Left cardiac atrium (tissue), 4 donors: ENCODE measurements at regions of chr22 and their contacts with region 1.

Region 1: GRCh38 chr22:43955040-43955882 is at the start of gene SAMM50:
- DNase-seq: peak; percentile 96
- ATAC-seq: peak; percentile 97 to 99
- total RNA-seq, gene SAMM50: 55.5 to 67.6 TPM

Region 2: GRCh38 chr22:43798492-43798891 is 156.8 kb before region 1 on chr22:
- intact Hi-C with region 1: no loop called
- DNase-seq: no peak
- ATAC-seq: no peak

Region 3: GRCh38 chr22:43812149-43812842 is 143.0 kb before region 1 on chr22 and contains the start of gene EFCAB6:
- intact Hi-C with region 1: loop called in 1 of 2 experiments (anchors 10 kb)
- DNase-seq: peak; percentile 94
- ATAC-seq: peak; percentile 99
- total RNA-seq, gene EFCAB6: 1.7 to 1.8 TPM

Region 4: DNA sequence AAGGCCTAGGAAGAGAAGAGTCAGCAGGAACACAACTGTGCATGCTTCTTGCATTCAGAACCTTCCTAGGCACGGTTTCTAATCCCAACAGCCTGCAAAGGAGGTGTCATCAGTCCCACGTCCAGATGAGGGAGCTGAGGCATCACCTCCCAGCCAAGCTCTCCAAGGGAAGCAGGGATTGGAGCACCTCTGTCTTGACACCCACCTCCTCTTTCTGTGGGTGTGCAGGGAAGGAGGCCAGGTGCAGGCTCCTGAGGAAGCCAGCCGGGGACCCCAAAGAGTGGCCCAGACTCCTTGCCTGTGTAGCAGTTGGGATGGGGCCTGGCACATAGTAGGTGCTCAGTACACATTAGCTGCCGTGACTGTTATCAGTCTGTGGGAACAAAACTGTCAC is 65.4 kb before region 1 on chr22:
- intact Hi-C with region 1: no loop called
- DNase-seq: no peak
- ATAC-seq: no peak